HEK293T (cell line): ENCODE measurements at regions of chr6 and their contacts with region 1.

Region 1: DNA sequence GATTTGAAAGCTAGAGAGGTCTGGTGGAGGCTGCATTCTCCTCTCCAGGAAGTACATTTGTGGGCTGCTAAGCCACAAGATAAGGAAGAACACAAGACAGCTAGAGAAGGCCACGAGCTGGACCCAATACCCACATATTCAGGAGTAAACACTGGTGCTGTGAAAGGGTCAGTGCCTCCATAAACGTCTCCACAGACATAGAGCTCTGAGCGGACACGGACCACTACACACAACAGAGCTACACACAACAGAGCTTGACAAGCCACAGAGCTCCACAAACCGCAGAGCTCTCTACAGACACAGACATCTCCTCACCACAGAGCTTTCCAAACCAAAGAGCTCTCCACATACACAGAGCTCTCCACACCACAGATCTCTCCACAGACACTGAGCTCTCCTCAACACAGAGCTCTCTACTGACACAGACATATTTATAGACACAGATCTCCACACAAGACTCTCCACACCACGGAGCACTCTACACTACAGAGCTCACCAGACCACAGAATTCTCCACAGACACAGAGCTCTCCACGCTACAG is 51.9 kb downstream of the ERMARD start:
- DNase-seq: no peak

Region 2: GRCh38 chr6:169723200-169723909 is 80.0 kb before region 1 on chr6:
- CTCF ChIA-PET with region 1: no interaction called
- POLR2A ChIA-PET with region 1: no interaction called
- DNase-seq: peak; percentile 66

Region 3: GRCh38 chr6:169789982-169790927 is 13.1 kb before region 1 on chr6:
- CTCF ChIA-PET with region 1: interaction called, 8 read pairs
- POLR2A ChIA-PET with region 1: interaction called, 16 read pairs
- DNase-seq: peak; percentile 94